Endothelial cell of umbilical vein (primary cell): ENCODE measurements at regions of chr2 and their contacts with region 1.

Region 1: DNA sequence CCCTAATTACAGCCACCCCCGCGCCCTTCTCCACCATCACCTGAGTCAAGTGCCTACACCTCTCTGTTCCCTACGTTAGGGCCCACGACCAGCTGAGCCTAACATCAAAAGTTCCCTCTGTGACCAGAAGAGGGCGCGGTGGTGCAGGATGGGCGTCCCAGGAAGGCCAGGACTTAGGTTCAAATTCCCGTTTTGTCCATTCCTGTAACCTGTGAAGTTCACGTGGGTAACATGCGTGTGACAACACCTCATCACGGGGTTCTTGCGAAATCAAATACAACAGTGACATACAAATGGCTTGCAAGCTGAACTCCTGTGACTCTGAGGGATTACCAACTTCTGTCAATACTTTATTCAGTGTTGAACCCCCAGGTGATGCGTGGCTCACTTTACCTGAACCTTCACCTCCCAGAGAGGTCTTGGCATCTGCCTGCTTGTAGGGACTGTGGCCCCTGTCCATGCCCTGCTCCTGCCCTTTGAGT is 207.9 kb downstream of the ARL4C start:
- DNase-seq: peak; percentile 65
- H3K4me3 ChIP-seq: no peak overlapping the region
- H3K27ac ChIP-seq: no peak overlapping the region
- H3K4me1 ChIP-seq: peaks cover 37% of the 10 kb centered on the region
- H3K27me3 ChIP-seq: no peaks in the 10 kb centered on the region
- CTCF ChIP-seq: peak; percentile 75 to 88
- POLR2A ChIP-seq: no peak

Region 2: DNA sequence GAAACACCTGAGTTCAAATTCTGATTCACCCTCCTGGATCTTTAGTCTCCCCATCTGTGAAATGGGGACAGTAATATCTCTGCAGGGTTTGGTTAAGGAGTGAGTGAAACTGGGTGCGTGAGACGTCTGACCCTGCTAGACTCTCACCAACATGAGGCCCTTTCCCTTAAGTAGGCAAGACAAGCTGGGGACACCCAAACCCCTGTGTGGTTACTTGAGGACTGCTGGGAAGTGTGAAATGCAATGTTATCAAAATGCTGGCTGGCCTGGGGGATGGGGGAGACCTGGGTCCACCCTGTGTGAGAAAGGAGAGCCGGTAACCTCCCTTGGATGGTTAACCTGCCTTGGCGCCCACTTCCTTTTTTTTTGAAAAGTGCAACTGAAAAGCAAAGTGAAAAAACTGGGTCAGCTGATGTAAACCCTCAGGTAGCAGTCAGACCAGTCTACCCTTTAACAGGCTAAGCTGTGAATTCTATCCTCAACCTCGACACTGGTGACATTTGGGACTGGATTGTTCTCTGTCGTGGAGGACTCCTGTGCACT is 1146.6 kb before region 1 on chr2:
- CTCF ChIA-PET with region 1: no interaction called
- POLR2A ChIA-PET with region 1: no interaction called
- dilution Hi-C with region 1: no loop called
- intact Hi-C with region 1: no loop called
- DNase-seq: no peak
- H3K4me3 ChIP-seq: no peak overlapping the region
- H3K27ac ChIP-seq: no peak overlapping the region
- H3K4me1 ChIP-seq: no peaks in the 10 kb centered on the region
- H3K27me3 ChIP-seq: no peaks in the 10 kb centered on the region
- CTCF ChIP-seq: no peak
- POLR2A ChIP-seq: no peak

Region 3: GRCh38 chr2:233953087-233953801 is 335.8 kb before region 1 on chr2:
- CTCF ChIA-PET with region 1: no interaction called
- POLR2A ChIA-PET with region 1: no interaction called
- dilution Hi-C with region 1: no loop called
- intact Hi-C with region 1: no loop called
- DNase-seq: no peak
- H3K4me3 ChIP-seq: no peak overlapping the region
- H3K27ac ChIP-seq: no peak overlapping the region
- H3K4me1 ChIP-seq: no peaks in the 10 kb centered on the region
- H3K27me3 ChIP-seq: no peaks in the 10 kb centered on the region
- CTCF ChIP-seq: no peak
- POLR2A ChIP-seq: no peak

Region 4: DNA sequence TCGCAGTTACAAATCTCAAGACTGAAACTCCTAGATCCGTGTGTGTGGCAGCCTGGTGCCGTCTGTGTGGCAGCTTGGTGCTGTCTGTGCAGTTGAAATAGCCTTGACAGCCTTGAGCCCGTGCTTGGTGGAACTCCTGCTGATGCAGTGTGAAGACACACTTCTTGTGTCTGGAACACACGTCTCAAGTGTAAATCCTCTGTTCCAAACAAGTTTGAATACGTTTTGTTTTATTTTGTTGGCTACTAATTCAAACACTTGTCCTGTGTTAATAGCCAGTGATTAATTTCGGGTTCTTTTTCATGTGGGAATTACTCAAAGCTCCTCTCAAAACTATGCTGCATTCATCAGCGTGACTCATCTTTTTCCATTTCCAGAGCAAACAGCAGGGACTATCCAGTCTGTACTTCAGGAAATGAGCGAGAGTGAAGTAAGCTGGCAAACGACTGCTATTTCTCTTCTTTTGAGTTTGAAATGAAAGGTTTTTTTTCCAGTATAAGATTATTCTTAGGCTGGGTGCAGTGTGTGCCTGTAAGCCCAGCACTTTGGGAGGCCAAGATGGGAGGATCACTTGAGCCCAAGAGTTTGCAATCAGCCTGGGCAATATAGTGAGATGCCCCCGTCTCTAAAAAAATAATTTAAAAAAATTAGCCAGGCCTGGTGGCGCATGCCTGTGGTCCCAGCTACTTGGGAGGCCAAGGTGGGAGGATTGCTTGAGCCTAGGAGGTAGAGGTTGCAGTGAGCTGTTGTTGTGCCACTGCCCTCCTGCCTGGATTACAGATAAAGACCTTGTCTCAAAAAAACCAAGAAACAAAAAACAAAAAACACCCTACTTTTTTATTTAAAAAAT is 85.7 kb before region 1 on chr2:
- CTCF ChIA-PET with region 1: no interaction called
- POLR2A ChIA-PET with region 1: no interaction called
- dilution Hi-C with region 1: no loop called
- intact Hi-C with region 1: loop called (anchors 1 kb)
- DNase-seq: peak; percentile 98
- H3K4me3 ChIP-seq: peak overlapping the region in 1 of 3 experiments; percentile 14
- H3K27ac ChIP-seq: peak overlapping the region; percentile 93
- H3K4me1 ChIP-seq: peaks cover 17% of the 10 kb centered on the region
- H3K27me3 ChIP-seq: no peaks in the 10 kb centered on the region
- CTCF ChIP-seq: no peak
- POLR2A ChIP-seq: no peak

Region 5: DNA sequence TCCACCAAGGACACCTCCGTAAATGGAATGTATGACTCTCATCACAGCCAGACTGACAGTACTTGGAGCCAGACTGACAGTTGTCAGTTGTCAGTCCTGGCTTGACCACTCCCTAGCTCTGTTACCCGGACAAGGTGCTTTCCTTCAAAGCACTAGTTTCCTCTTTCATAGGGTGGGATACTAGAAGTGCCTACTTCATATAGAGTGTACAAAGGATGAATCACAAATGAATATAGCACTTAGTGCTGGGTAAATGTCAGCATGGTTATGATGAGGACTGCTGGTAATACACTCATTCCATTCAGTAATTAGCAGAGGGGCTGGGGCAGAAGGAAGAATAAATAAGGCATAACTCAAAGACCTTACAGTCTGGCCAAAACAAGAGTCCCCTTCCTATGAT is 116.4 kb after region 1 on chr2:
- CTCF ChIA-PET with region 1: no interaction called
- POLR2A ChIA-PET with region 1: no interaction called
- dilution Hi-C with region 1: no loop called
- intact Hi-C with region 1: loop called (anchors 1 kb)
- DNase-seq: no peak
- H3K4me3 ChIP-seq: no peak overlapping the region
- H3K27ac ChIP-seq: peak overlapping the region; percentile 4
- H3K4me1 ChIP-seq: peaks cover 14% of the 10 kb centered on the region
- H3K27me3 ChIP-seq: peaks cover 0 to under 1% of the 10 kb centered on the region in 2 experiments
- CTCF ChIP-seq: no peak
- POLR2A ChIP-seq: no peak

Region 6: DNA sequence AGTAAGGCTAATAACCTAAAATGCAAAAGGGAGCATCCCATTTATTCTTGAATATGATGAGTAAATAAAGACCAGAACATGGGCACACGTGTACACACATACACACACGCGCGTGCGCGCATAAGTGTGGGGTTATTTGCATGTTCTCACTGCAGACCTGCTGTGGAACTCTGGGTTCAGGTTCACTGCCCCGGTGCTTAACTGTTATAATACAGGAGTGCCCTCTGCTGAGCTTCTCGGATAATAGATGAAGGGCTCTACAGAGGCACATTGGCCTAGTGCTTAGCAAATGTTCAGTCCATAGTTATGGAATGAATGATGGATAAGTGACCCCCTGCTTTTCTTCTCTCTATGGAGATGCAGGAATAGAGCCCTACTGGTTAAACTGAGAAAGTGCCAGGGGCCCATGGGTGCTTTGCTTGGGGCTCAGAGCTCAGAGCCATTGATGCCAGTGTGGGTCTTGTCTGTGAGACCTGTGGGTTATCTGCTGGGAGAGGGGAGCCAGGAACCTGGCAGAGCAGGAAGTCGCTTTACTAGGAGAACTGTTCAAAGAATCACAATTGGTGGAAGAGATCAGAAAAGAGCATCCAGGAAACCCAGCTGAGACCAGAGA is 211.5 kb after region 1 on chr2:
- CTCF ChIA-PET with region 1: interaction called, 81 read pairs
- POLR2A ChIA-PET with region 1: no interaction called
- dilution Hi-C with region 1: no loop called
- intact Hi-C with region 1: loop called (anchors 1 kb)
- DNase-seq: peak; percentile 61
- H3K4me3 ChIP-seq: no peak overlapping the region
- H3K27ac ChIP-seq: no peak overlapping the region
- H3K4me1 ChIP-seq: peaks cover 3% of the 10 kb centered on the region
- H3K27me3 ChIP-seq: peaks cover 0 to 2% of the 10 kb centered on the region in 2 experiments
- CTCF ChIP-seq: peak; percentile 51 to 58
- POLR2A ChIP-seq: no peak

Region 7: GRCh38 chr2:234595829-234596228 is 306.8 kb after region 1 on chr2:
- CTCF ChIA-PET with region 1: no interaction called
- POLR2A ChIA-PET with region 1: no interaction called
- dilution Hi-C with region 1: no loop called
- intact Hi-C with region 1: no loop called
- DNase-seq: no peak
- H3K4me3 ChIP-seq: no peak overlapping the region
- H3K27ac ChIP-seq: no peak overlapping the region
- H3K4me1 ChIP-seq: no peaks in the 10 kb centered on the region
- H3K27me3 ChIP-seq: peaks cover 0 to 8% of the 10 kb centered on the region in 2 experiments
- CTCF ChIP-seq: no peak
- POLR2A ChIP-seq: no peak

Region 8: DNA sequence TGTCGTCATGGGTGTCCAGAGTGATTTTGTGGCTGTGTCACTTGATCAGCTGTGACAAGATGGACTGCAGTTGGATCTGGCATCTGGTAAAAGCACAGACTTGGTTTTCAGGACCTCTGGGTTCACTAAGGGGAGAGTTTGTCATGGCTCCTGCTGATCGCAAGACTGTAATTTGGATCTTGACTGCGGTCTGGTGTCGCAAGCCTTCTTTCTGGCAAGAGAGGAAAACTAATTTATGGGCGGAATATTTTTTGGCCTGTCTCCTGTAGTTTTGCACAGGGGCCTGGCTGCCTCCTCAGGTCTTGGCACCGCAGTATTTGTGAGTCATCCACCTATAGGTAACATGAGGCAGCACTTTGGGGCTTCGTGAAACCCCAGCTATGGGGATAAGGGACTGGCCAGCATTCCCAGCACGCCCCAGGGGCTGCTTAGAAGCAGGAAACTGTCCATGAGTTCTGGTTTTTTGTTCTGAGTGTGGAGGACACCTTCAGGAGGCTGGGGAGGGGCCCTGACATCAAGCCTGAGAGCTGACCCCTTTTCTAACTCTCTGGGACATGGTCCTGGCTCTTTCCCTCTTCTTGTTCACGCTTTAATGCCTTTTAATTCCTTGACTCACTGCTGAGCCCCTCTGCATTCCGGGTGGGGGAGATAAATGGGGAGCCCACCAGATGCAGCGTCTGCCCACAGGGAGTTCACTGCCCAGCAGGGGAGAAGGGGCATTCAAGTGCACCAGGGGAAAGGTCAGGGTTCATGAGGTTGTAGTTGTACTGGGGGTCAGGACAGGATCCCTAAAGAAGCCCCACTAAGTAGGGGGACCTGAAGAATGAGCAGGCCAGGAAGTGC is 675.0 kb after region 1 on chr2:
- CTCF ChIA-PET with region 1: no interaction called
- POLR2A ChIA-PET with region 1: no interaction called
- dilution Hi-C with region 1: no loop called
- intact Hi-C with region 1: no loop called
- DNase-seq: no peak
- H3K4me3 ChIP-seq: no peak overlapping the region
- H3K27ac ChIP-seq: no peak overlapping the region
- H3K4me1 ChIP-seq: peaks cover 20% of the 10 kb centered on the region
- H3K27me3 ChIP-seq: no peaks in the 10 kb centered on the region
- CTCF ChIP-seq: no peak
- POLR2A ChIP-seq: no peak